Dorsolateral prefrontal cortex (tissue), 120 donors: ENCODE measurements at regions of chr3 and their contacts with region 1.

Region 1: GRCh38 chr3:170961616-170962400 is 53.4 kb upstream of the EIF5A2 start:
- DNase-seq: peak in 3 of 10 donors; percentile 21 to 62 (median 50)
- H3K4me3 ChIP-seq: peak overlapping the region in 33 of 59 donors; percentile 1 to 49 (median 26)
- H3K27ac ChIP-seq: peak overlapping the region in 58 of 59 donors; percentile 14 to 92 (median 82)
- H3K27me3 ChIP-seq: no peaks in the 10 kb centered on the region
- CTCF ChIP-seq: peak; percentile 34 to 90 (median 78)

Region 2: DNA sequence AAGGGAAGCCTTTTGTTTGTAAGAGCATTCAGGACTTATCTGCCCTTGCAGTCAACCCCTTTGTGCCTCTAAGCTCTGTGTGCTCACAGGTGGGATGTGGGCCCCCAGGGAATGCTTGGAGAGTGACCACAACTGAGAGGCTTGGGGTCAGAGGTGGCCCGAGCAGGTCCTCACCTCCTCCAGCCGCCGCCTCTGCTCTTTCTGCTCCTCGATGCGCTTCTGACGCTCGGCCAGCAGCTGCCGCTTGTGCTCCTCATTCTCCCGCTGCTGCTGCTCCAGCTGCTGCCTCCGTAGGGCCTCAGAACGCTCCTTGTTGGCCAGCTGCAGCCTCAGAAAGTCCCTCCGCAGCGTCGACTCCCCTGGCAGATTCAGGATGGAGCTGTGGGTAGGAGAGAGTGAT is 195.5 kb after region 1 on chr3:
- intact Hi-C with region 1: loop called in 1 of 2 experiments (anchors 5 kb)
- DNase-seq: peak in 9 of 10 donors; percentile 48 to 77 (median 66)
- H3K4me3 ChIP-seq: no peak overlapping the region
- H3K27ac ChIP-seq: peak overlapping the region; percentile 27 to 98 (median 92)
- H3K27me3 ChIP-seq: no peaks in the 10 kb centered on the region
- CTCF ChIP-seq: peak in 37 of 56 donors; percentile 9 to 56 (median 29)

Region 3: DNA sequence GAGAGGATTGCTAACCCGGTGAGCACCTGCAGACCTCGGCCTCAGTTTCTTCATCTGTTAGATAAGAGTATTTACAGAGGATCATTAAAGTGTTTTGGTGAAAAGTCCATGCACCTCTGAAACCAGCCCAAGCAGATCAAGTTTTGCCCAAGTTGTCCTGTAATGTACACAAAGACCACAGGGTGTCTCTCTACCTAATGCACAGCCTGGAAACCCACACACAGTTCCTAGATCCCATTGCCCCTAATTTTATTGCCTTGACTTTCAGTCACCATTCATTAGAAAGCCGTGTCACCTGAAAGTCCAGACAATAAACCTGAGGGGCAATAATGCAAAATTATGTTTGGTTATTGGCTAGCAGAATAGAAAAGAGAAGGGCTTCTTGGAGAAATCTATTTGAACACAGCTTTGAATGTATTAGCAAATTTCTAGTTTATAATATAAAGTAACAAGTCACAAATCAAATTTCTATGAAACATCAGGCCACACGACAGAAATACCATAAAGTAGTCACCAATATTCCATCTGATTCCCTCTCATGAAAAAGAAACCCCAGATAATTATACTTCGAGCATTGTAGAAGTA is 226.0 kb after region 1 on chr3:
- intact Hi-C with region 1: loop called (anchors 2 kb)
- DNase-seq: no peak
- H3K4me3 ChIP-seq: no peak overlapping the region
- H3K27ac ChIP-seq: peak overlapping the region in 2 of 59 donors; percentile 29 to 38
- H3K27me3 ChIP-seq: no peaks in the 10 kb centered on the region
- CTCF ChIP-seq: peak; percentile 35 to 87 (median 73)

Region 4: GRCh38 chr3:171566803-171567422 is 605.1 kb after region 1 on chr3:
- intact Hi-C with region 1: loop called (anchors 1 to 5 kb)
- DNase-seq: no peak
- H3K4me3 ChIP-seq: no peak overlapping the region
- H3K27ac ChIP-seq: no peak overlapping the region
- H3K27me3 ChIP-seq: no peaks in the 10 kb centered on the region
- CTCF ChIP-seq: peak; percentile 58 to 98 (median 87)

Region 5: GRCh38 chr3:171829841-171830517 is 868.2 kb after region 1 on chr3:
- intact Hi-C with region 1: loop called in 1 of 2 experiments (anchors 10 kb)
- DNase-seq: peak in 9 of 10 donors; percentile 54 to 75 (median 60)
- H3K4me3 ChIP-seq: peak overlapping the region in 1 of 59 donors; percentile 13
- H3K27ac ChIP-seq: peak overlapping the region in 57 of 59 donors; percentile 19 to 87 (median 73)
- H3K27me3 ChIP-seq: no peaks in the 10 kb centered on the region
- CTCF ChIP-seq: peak in 55 of 56 donors; percentile 15 to 85 (median 61)